Transverse colon (tissue), 4 donors: ENCODE measurements at regions of chr10 and their contacts with region 1.

Region 1: GRCh38 chr10:119445311-119445934 is 97.1 kb downstream of the RGS10 start:
- DNase-seq: peak; percentile 88
- H3K4me3 ChIP-seq: no peak overlapping the region
- H3K27ac ChIP-seq: no peak overlapping the region
- H3K4me1 ChIP-seq: no peaks in the 10 kb centered on the region
- H3K27me3 ChIP-seq: no peaks in the 10 kb centered on the region
- CTCF ChIP-seq: peak; percentile 87 to 99 (median 97)
- EP300 ChIP-seq: no peak
- POLR2A ChIP-seq: no peak

Region 2: GRCh38 chr10:119199231-119199992 is 246.0 kb before region 1 on chr10:
- in situ Hi-C with region 1: loop called in 1 of 4 experiments (anchors 10 kb)
- intact Hi-C with region 1: loop called (anchors 5 kb)
- DNase-seq: peak; percentile 63
- H3K4me3 ChIP-seq: no peak overlapping the region
- H3K27ac ChIP-seq: no peak overlapping the region
- H3K4me1 ChIP-seq: peaks cover 0 to 2% (median 0%) of the 10 kb centered on the region in 4 donors
- H3K27me3 ChIP-seq: peaks cover 4% of the 10 kb centered on the region
- CTCF ChIP-seq: peak; percentile 68 to 77 (median 74)
- EP300 ChIP-seq: no peak
- POLR2A ChIP-seq: no peak

Region 3: GRCh38 chr10:119395280-119395989 is 50.0 kb before region 1 on chr10:
- in situ Hi-C with region 1: no loop called
- intact Hi-C with region 1: loop called (anchors 1 kb)
- DNase-seq: no peak
- H3K4me3 ChIP-seq: no peak overlapping the region
- H3K27ac ChIP-seq: peak overlapping the region; percentile 37 to 63 (median 58)
- H3K4me1 ChIP-seq: peaks cover 0 to 28% (median 6%) of the 10 kb centered on the region in 4 donors
- H3K27me3 ChIP-seq: no peaks in the 10 kb centered on the region
- CTCF ChIP-seq: no peak
- EP300 ChIP-seq: no peak
- POLR2A ChIP-seq: no peak